Endothelial cell of umbilical vein (primary cell): ENCODE measurements at regions of chr20 and their contacts with region 1.

Region 1: GRCh38 chr20:58087193-58087858 is 141.1 kb downstream of the ANKRD60 start:
- DNase-seq: peak; percentile 62
- H3K4me3 ChIP-seq: no peak overlapping the region
- H3K27ac ChIP-seq: no peak overlapping the region
- H3K4me1 ChIP-seq: no peaks in the 10 kb centered on the region
- H3K27me3 ChIP-seq: no peaks in the 10 kb centered on the region
- CTCF ChIP-seq: peak; percentile 90 to 97
- POLR2A ChIP-seq: no peak

Region 2: DNA sequence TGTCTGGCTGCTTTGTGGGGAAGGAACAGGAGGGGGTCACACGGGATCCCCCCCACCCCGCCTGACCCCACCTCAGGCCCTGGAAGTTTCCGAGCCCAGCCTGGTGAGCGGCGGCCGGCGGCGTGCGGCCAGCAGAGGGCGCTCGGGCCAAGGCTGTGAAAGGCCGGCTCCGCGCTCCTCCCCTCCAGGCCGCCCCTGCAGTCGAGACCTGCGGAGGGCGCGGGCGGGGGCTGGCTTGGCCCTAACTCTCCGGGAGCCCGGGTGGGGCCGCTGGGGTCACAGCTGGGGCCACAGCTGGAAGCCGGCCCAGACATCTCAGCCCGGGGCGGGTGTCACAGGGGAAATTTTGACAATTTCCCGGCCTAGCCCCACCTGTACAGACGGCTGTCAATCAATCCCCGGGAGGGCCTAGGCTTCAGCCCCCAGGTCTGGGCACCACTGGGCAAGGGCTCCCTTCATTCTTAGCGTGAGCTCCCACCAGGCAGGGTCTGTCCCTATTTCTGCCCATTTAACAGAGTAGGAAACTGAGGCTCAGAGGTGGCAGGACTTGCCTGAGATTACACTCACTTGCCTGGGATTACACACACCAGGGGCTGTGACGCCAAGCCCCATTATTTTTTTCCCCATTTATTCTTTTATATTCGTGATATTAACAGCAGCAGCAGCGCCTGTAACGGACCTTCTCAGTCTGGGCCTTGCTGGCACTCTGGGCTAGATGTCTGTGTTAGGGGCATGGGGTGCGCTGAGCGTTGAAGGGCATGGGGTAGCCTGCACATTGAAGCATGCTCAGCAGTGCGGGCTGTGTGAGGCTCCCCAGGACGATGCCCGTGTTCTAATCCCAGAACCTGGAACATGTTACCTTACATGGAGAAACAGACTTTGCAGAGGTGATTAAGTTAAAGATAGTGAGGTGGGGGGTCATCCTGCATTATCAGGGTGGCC is 490.1 kb before region 1 on chr20:
- CTCF ChIA-PET with region 1: interaction called, 48 read pairs
- POLR2A ChIA-PET with region 1: no interaction called
- dilution Hi-C with region 1: no loop called
- intact Hi-C with region 1: loop called (anchors 1 kb)
- DNase-seq: peak; percentile 17
- H3K4me3 ChIP-seq: no peak overlapping the region
- H3K27ac ChIP-seq: no peak overlapping the region
- H3K4me1 ChIP-seq: no peaks in the 10 kb centered on the region
- H3K27me3 ChIP-seq: peaks cover 2% of the 10 kb centered on the region in 2 experiments
- CTCF ChIP-seq: peak; percentile 88 to 94
- POLR2A ChIP-seq: no peak

Region 3: GRCh38 chr20:57628047-57628961 is 459.0 kb before region 1 on chr20:
- CTCF ChIA-PET with region 1: interaction called, 83 read pairs
- POLR2A ChIA-PET with region 1: no interaction called
- dilution Hi-C with region 1: loop called (anchors 25 kb)
- intact Hi-C with region 1: no loop called
- DNase-seq: peak; percentile 86
- H3K4me3 ChIP-seq: no peak overlapping the region
- H3K27ac ChIP-seq: peak overlapping the region; percentile 61
- H3K4me1 ChIP-seq: peaks cover 8% of the 10 kb centered on the region
- H3K27me3 ChIP-seq: peaks cover 6% of the 10 kb centered on the region in 2 experiments
- CTCF ChIP-seq: no peak
- POLR2A ChIP-seq: no peak

Region 4: DNA sequence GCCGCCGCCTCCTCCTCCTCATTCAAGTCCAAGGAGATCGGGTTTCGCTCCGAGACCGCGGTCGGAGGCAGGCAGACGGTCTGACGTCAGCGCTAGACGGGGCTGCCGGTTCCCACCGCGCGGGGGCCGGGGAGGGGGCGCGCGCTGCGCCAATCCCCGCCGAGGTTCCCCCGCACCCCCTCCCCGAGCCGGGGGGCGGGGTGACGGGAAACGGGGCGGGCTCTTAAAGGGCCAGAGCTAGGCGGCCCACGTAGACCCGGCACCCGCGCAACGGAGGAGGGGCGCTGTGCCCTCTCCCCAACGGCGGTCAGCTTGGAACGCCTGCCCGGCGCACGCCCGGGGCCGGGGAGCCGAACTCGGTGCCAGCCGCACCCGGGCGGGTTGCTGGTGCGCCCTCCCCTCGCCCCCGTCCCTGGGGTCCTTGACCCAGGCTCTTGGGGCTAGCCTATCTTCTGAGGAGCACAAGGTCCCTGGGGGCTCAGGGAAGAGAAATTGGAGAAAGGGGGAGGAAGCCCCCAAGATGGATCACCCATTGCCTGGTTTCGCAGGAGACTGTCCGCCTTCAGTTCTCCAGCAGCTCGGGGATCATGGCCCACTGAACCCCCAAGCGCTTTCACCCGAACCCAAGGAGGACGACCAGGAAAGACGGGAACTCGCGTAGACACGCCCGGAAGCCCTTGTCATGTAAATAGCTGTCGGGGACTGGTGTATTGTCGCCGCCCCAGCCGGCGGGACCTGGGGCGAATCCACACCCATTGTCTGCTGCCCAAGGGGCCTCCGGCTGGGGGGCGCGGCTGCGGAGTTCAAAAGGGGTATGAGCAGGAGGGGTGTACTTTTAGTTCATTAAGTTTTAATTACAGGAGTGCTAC is 377.2 kb before region 1 on chr20 and contains the start of gene PMEPA1:
- CTCF ChIA-PET with region 1: interaction called, 17 read pairs
- POLR2A ChIA-PET with region 1: no interaction called
- dilution Hi-C with region 1: no loop called
- intact Hi-C with region 1: loop called (anchors 1 kb)
- DNase-seq: peak; percentile 96
- H3K4me3 ChIP-seq: peak within 1 kb of the TSS; percentile 79 to 88 (median 81)
- H3K27ac ChIP-seq: peak within 1 kb of the TSS; percentile 83
- H3K4me1 ChIP-seq: peaks cover 14% of the 10 kb centered on the region
- H3K27me3 ChIP-seq: no peaks in the 10 kb centered on the region
- CTCF ChIP-seq: peak in 1 of 2 donors; percentile 15
- POLR2A ChIP-seq: no peak
- total RNA-seq, gene PMEPA1: 31.6 and 47.1 TPM in 2 replicates

Region 5: DNA sequence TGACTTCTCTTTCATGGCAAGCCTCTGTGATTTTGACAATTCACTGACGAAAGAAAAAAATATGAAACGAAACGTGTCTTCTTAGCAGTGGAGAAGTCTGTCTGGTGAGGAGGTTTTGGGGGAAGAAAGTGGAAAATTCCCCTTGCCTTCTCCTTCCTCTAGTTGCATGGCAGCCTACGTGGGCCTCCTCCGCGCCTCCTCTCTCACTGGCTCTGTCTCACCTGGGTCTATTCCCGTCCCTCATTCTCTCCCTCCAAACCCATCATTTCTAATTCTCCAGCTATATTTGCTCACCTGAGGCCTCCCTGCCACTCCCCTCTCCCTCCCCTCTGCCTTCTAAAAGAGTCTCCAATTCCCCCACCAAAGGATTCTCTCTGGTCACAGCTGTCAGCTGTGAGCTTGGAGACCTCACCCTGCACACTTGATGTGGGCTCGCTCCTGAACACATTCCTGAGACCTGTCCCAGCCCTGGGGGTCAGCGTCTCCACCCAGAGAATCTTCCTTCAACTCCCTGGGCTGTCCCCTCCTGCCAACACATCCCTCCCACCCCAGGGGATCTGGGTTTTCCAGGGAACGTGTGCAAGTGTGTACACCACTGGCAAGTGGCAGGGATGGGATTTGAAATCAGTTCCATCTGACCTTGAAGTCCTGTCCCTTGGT is 217.9 kb before region 1 on chr20:
- CTCF ChIA-PET with region 1: no interaction called
- POLR2A ChIA-PET with region 1: no interaction called
- dilution Hi-C with region 1: no loop called
- intact Hi-C with region 1: no loop called
- DNase-seq: no peak
- H3K4me3 ChIP-seq: no peak overlapping the region
- H3K27ac ChIP-seq: no peak overlapping the region
- H3K4me1 ChIP-seq: no peaks in the 10 kb centered on the region
- H3K27me3 ChIP-seq: peaks cover 0 to 4% of the 10 kb centered on the region in 2 experiments
- CTCF ChIP-seq: no peak
- POLR2A ChIP-seq: no peak

Region 6: GRCh38 chr20:57999465-58000111 is 87.7 kb before region 1 on chr20:
- CTCF ChIA-PET with region 1: interaction called, 7 read pairs
- POLR2A ChIA-PET with region 1: no interaction called
- dilution Hi-C with region 1: no loop called
- intact Hi-C with region 1: loop called (anchors 5 kb)
- DNase-seq: peak; percentile 78
- H3K4me3 ChIP-seq: no peak overlapping the region
- H3K27ac ChIP-seq: no peak overlapping the region
- H3K4me1 ChIP-seq: no peaks in the 10 kb centered on the region
- H3K27me3 ChIP-seq: peaks cover 2 to 10% of the 10 kb centered on the region in 2 experiments
- CTCF ChIP-seq: no peak
- POLR2A ChIP-seq: no peak

Region 7: DNA sequence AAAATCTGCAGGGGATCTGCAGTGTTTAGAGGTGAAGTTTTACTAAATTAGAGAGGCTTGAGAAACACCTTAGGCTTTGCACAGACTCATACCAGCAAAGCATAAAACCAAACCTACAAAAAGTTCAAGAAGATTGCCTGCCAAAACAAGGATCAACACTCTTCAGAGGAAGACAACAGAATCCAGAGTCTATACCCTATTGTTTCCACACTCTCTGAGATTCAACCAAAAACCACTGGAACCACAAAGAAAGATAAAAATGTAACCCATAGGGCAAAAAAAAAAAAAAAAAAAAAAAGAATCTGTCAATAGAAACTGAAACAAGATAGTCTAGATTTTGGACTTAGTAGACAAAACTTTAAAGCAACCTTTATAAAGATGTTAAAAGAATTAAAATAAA is 38.4 kb after region 1 on chr20:
- CTCF ChIA-PET with region 1: no interaction called
- POLR2A ChIA-PET with region 1: no interaction called
- dilution Hi-C with region 1: no loop called
- intact Hi-C with region 1: no loop called
- DNase-seq: no peak
- H3K4me3 ChIP-seq: no peak overlapping the region
- H3K27ac ChIP-seq: no peak overlapping the region
- H3K4me1 ChIP-seq: no peaks in the 10 kb centered on the region
- H3K27me3 ChIP-seq: peaks cover 10 to 20% of the 10 kb centered on the region in 2 experiments
- CTCF ChIP-seq: no peak
- POLR2A ChIP-seq: no peak

Region 8: GRCh38 chr20:58179432-58180099 is 92.2 kb after region 1 on chr20:
- CTCF ChIA-PET with region 1: interaction called, 18 read pairs
- POLR2A ChIA-PET with region 1: no interaction called
- dilution Hi-C with region 1: no loop called
- intact Hi-C with region 1: loop called (anchors 5 kb)
- DNase-seq: peak; percentile 30
- H3K4me3 ChIP-seq: no peak overlapping the region
- H3K27ac ChIP-seq: no peak overlapping the region
- H3K4me1 ChIP-seq: no peaks in the 10 kb centered on the region
- H3K27me3 ChIP-seq: peaks cover 3 to 6% of the 10 kb centered on the region in 2 experiments
- CTCF ChIP-seq: peak; percentile 95 to 97
- POLR2A ChIP-seq: no peak